ENCODE measurements at regions of chr22 and their contacts with region 1.

Region 1: DNA sequence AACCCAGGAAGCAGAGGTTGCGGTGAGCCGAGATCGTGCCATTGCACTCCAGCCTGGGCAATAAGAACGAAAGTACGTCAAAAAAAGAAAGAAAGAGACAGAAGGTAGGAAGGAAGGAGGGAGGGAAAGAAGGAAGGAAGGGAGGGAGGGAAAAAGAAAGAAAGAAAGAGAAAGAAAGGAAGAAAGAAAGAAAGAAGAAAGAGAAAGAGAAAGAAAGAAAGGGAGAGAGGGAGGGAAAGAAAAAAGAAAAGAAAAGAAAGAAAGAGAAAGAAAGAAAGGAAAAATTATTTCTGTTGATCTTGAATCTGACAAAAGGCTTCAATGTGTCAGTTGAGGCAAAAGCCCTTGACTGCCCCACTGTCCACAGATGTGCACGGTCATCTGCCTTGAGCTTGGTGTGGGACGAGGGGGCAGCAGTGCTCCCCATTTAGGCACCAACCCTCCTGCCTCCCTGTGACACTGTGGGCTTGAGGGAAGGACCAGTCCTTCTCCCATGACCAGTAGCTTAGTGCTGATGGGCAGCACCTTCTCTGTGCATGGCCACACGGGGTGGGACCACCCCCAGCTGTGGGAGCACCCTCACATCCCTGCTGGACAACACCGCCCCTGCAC is 24.4 kb downstream of the KCTD17 start:
- H3K4me3 ChIP-seq: no peak overlapping the region
- H3K27ac ChIP-seq: no peak overlapping the region
- H3K4me1 ChIP-seq: no peaks in the 10 kb centered on the region
- CTCF ChIP-seq: no peak

Region 2: GRCh38 chr22:37088108-37088605 is 12.2 kb after region 1 on chr22:
- CTCF ChIA-PET with region 1: interaction called, 10 read pairs
- POLR2A ChIA-PET with region 1: no interaction called
- H3K4me3 ChIP-seq: no peak overlapping the region
- H3K27ac ChIP-seq: no peak overlapping the region
- H3K4me1 ChIP-seq: no peaks in the 10 kb centered on the region
- CTCF ChIP-seq: no peak

Measured in HEK293 (cell line).